ENCODE measurements at regions of chr1 and their contacts with region 1.

Region 1: DNA sequence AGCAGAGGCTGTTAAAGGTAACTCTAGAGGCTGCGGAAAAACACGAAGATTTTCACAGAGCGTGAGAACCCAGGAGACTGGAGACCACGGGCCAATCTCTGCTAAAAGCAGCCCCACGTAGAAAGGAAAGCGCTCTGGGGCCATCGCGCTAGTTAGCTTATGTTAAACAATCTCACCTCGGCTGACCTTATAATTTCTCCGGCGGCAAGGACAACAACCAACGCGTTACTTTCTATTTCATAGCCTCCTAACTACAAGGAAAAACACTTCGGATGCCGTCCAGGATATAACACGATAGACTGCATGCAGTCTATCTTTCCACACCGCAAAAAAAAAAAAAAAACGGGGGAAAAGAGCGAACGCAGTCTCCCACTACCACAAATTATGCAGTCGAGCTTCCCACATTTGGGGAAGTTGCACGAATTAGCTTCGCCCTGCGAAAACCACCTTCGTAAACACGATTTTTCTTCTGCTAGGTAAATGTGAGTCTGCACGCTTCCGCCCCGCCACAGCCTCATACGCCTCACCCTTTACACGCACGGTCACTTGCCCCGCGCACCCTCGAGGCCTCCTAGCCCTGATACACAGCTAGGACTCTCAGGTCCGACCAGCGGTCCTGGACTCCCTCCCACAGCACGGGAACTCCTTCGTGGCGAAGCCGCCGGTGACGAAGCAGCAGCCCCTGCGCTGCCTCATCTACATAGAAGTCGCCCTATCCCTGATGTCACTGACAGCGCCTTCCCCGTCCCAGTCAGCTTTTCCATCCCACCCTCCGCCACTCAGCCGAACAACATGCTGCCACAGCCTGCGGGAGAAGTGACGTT is 87.8 kb downstream of the PRKAB2 start:
- DNase-seq: peak; percentile 89 to 92
- H3K4me3 ChIP-seq: peak overlapping the region; percentile 41
- H3K4me3 Mint-ChIP-seq: peak overlapping the region; percentile 79
- H3K27ac Mint-ChIP-seq: peak overlapping the region; percentile 99
- H3K4me1 ChIP-seq: no peaks in the 10 kb centered on the region
- H3K4me1 Mint-ChIP-seq: no peaks in the 10 kb centered on the region
- H3K27me3 ChIP-seq: no peaks in the 10 kb centered on the region
- H3K27me3 Mint-ChIP-seq: no peaks in the 10 kb centered on the region
- CTCF ChIP-seq: no peak

Region 2: GRCh38 chr1:147062956-147063355 is 21.5 kb before region 1 on chr1:
- CTCF ChIA-PET with region 1: no interaction called
- POLR2A ChIA-PET with region 1: no interaction called
- intact Hi-C with region 1: no loop called
- DNase-seq: no peak
- H3K4me3 ChIP-seq: no peak overlapping the region
- H3K4me3 Mint-ChIP-seq: no peak overlapping the region
- H3K27ac Mint-ChIP-seq: no peak overlapping the region
- H3K4me1 ChIP-seq: no peaks in the 10 kb centered on the region
- H3K4me1 Mint-ChIP-seq: no peaks in the 10 kb centered on the region
- H3K27me3 ChIP-seq: no peaks in the 10 kb centered on the region
- H3K27me3 Mint-ChIP-seq: no peaks in the 10 kb centered on the region
- CTCF ChIP-seq: no peak

Region 3: DNA sequence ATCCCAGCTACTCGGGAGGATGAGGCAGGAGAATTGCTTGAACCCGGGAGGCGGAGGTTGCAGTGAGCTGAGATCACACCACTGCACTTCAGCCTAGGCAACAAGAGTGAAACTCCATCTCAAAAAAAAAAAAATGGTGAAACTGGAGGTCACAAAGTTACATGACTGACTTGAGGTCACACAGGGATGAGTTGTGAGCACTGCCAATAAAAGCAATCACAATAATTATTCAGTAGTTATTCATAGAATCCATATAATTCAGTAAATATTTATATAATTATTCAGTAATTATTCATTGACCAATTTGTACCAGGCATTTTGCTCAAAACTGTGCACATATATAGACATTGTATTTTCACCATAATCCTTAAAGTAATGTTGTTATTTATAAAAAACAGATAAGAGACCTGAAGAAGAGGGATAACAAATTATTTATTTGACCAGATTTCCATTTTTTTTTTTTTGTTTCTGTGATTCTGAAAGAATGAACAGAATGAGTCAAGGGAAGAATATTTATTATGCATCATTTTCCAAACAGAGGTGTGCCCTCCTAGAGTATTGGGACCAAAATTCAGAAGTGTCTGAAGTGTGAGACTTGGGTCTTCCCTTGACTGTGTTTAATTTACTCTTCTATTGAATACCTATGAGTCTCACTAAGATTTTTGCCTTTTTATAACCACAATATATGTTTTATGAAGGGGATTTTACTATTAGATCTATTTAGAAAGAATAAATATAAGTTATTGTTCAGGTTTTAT is 44.8 kb after region 1 on chr1:
- CTCF ChIA-PET with region 1: no interaction called
- POLR2A ChIA-PET with region 1: no interaction called
- intact Hi-C with region 1: no loop called
- DNase-seq: no peak
- H3K4me3 ChIP-seq: no peak overlapping the region
- H3K4me3 Mint-ChIP-seq: no peak overlapping the region
- H3K27ac Mint-ChIP-seq: no peak overlapping the region
- H3K4me1 ChIP-seq: no peaks in the 10 kb centered on the region
- H3K4me1 Mint-ChIP-seq: no peaks in the 10 kb centered on the region
- H3K27me3 ChIP-seq: no peaks in the 10 kb centered on the region
- H3K27me3 Mint-ChIP-seq: no peaks in the 10 kb centered on the region
- CTCF ChIP-seq: no peak

Region 4: DNA sequence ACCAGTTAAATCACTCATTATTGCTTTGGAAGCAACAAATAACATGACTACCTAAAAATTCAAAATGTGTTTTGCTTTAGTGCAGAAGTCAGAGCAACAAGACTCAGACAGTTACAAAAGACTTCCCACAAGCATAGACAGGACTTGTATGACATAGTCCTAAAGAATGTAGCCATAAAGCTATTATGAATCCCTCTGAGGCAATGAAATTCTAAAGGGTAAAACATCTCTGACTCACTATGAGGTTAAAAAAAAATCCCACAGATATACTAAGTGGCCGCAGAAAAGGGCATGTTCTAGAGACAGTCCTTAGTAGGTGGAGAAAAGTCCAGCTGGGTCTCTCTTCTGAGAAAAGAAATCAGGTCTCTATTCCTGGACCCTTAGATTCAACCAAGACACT is 82.9 kb after region 1 on chr1:
- CTCF ChIA-PET with region 1: no interaction called
- POLR2A ChIA-PET with region 1: interaction called, 28 read pairs
- intact Hi-C with region 1: loop called (anchors 2 kb)
- DNase-seq: peak in 1 of 2 experiments; percentile 12
- H3K4me3 ChIP-seq: no peak overlapping the region
- H3K4me3 Mint-ChIP-seq: no peak overlapping the region
- H3K27ac Mint-ChIP-seq: peak overlapping the region; percentile 26
- H3K4me1 ChIP-seq: peaks cover 46% of the 10 kb centered on the region
- H3K4me1 Mint-ChIP-seq: peaks cover 39% of the 10 kb centered on the region
- H3K27me3 ChIP-seq: no peaks in the 10 kb centered on the region
- H3K27me3 Mint-ChIP-seq: no peaks in the 10 kb centered on the region
- CTCF ChIP-seq: no peak

Region 5: GRCh38 chr1:147341246-147341645 is 256.8 kb after region 1 on chr1:
- CTCF ChIA-PET with region 1: no interaction called
- POLR2A ChIA-PET with region 1: no interaction called
- intact Hi-C with region 1: no loop called
- DNase-seq: no peak
- H3K4me3 ChIP-seq: no peak overlapping the region
- H3K4me3 Mint-ChIP-seq: no peak overlapping the region
- H3K27ac Mint-ChIP-seq: no peak overlapping the region
- H3K4me1 ChIP-seq: peaks cover 12% of the 10 kb centered on the region
- H3K4me1 Mint-ChIP-seq: peaks cover 13% of the 10 kb centered on the region
- H3K27me3 ChIP-seq: no peaks in the 10 kb centered on the region
- H3K27me3 Mint-ChIP-seq: peaks cover 6% of the 10 kb centered on the region
- CTCF ChIP-seq: no peak

Measured in Caco-2 (cell line).